PC-3 (cell line): ENCODE measurements at regions of chr2 and their contacts with region 1.

Region 1: DNA sequence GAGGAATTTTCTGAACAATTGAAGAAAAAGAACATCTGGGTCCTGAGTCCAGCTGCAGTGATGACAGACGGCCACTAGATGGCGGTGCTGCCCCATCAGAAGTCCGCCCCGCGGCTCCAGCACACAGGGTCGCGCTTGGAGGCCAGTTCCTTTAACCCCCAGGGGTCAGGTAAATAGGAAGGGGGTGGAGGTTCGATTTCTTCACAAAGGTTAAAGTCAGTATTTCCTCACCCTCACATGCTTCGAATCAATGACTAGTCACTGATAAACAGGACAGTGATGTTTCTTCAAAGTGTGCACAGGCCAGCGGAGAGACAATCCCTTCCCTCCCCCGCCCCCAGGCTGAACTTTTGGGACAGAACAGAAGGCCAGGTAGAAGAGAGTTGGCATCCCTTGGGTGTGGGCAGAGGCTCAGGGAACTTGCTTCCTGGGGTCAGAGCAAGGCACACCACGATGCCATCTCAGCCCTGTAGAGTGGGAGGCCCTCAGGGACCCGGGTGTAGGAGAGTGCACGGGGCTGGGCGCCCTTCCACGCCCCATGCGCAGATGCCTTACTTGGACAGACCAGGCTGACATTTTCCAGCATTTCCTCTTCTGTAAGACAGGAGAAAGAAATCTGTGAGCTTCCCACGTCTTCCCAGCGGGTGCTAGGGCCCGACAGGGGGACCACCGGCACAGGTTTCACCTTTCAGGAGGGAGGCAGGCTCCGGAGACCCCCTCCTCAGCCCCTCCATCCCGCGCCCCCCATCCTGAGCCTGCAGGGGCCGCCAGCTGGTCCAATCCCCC is 722 bp downstream of the APOB start:
- DNase-seq: peak; percentile 51
- ATAC-seq: peak; percentile 70
- H3K4me3 ChIP-seq: no peak overlapping the region
- H3K27ac ChIP-seq: no peak overlapping the region
- H3K4me1 ChIP-seq: no peaks in the 10 kb centered on the region
- H3K27me3 ChIP-seq: peaks cover 28% of the 10 kb centered on the region
- CTCF ChIP-seq: peak; percentile 99

Region 2: GRCh38 chr2:21118302-21118920 is 75.3 kb after region 1 on chr2:
- CTCF ChIA-PET with region 1: interaction called, 8 read pairs
- POLR2A ChIA-PET with region 1: no interaction called
- intact Hi-C with region 1: loop called (anchors 1 kb)
- DNase-seq: peak; percentile 34
- ATAC-seq: no peak
- H3K4me3 ChIP-seq: no peak overlapping the region
- H3K27ac ChIP-seq: no peak overlapping the region
- H3K4me1 ChIP-seq: no peaks in the 10 kb centered on the region
- H3K27me3 ChIP-seq: no peaks in the 10 kb centered on the region
- CTCF ChIP-seq: peak; percentile 66

Region 3: GRCh38 chr2:21317131-21317530 is 274.0 kb after region 1 on chr2:
- CTCF ChIA-PET with region 1: no interaction called
- POLR2A ChIA-PET with region 1: no interaction called
- intact Hi-C with region 1: loop called (anchors 5 kb)
- DNase-seq: peak; percentile 38
- ATAC-seq: no peak
- H3K4me3 ChIP-seq: no peak overlapping the region
- H3K27ac ChIP-seq: no peak overlapping the region
- H3K4me1 ChIP-seq: no peaks in the 10 kb centered on the region
- H3K27me3 ChIP-seq: no peaks in the 10 kb centered on the region
- CTCF ChIP-seq: peak; percentile 60